PC-3 (cell line): ENCODE measurements at regions of chr12 and their contacts with region 1.

Region 1: GRCh38 chr12:73973486-73973885 is 564.1 kb upstream of the ATXN7L3B start:
- DNase-seq: no peak
- ATAC-seq: no peak
- H3K4me3 ChIP-seq: no peak overlapping the region
- H3K27ac ChIP-seq: no peak overlapping the region
- H3K4me1 ChIP-seq: no peaks in the 10 kb centered on the region
- H3K27me3 ChIP-seq: no peaks in the 10 kb centered on the region
- CTCF ChIP-seq: no peak

Region 2: DNA sequence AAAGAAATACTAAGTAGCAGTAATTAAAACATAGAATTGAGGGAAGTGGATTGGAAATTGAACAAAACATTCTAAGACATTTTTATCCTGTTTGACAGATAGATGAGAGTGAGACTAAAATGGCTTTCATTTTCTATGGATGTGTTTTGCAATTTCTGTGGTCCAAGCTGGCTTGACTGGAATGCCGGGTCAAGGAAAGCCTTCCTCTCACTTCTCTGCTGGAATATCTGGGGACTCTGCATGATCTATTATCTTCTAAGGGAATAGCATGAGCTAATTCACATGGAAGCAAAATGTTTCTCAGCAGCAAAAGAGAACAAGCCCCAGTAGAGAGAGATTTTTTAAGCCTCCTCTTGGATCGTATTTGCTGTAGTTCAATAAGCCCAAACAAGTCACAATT is 156.2 kb after region 1 on chr12:
- CTCF ChIA-PET with region 1: no interaction called
- POLR2A ChIA-PET with region 1: interaction called, 11 read pairs
- intact Hi-C with region 1: no loop called
- DNase-seq: no peak
- ATAC-seq: no peak
- H3K4me3 ChIP-seq: no peak overlapping the region
- H3K27ac ChIP-seq: no peak overlapping the region
- H3K4me1 ChIP-seq: no peaks in the 10 kb centered on the region
- H3K27me3 ChIP-seq: no peaks in the 10 kb centered on the region
- CTCF ChIP-seq: no peak